GM12878 (cell line): ENCODE measurements at regions of chr6 and their contacts with region 1.

Region 1: DNA sequence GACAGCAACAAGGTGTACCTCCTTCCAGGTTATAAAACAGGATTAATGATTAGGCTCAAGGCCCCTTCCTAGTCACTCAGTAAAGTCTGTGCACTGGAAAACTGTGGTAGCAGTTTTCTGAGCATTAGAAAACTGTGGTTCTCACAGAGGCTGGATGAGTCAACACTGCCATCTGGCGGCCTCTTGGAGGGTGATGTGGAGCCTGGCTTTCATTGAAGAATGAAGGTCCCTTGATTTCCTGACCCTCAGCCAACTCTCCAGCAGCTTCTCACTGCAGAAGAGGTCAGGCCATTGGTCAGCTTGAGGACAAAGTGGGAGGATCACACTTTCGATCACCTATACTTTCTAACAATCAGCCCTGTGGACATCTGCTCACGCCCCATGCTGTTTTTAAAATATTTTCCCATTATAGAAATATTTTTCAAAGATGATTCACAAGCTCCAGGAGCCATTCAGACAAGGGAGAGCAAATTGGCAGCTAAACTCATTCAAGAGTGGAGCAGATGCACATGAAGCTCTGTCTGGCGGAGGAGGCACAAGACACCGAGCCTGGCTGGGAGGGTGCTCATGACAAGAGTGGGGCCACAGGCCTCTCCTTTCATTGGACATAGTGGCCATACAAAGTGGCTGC is 23.2 kb downstream of the PSMB1 start:
- DNase-seq: peak; percentile 4
- ATAC-seq: peak; percentile 97
- H3K4me3 ChIP-seq: no peak overlapping the region
- H3K27ac ChIP-seq: no peak overlapping the region
- H3K4me1 ChIP-seq: no peaks in the 10 kb centered on the region
- H3K27me3 ChIP-seq: no peaks in the 10 kb centered on the region
- CTCF ChIP-seq: peak; percentile 84 to 94 (median 92); a peak in 5 of 6 replicates
- EP300 ChIP-seq: no peak
- POLR2A ChIP-seq: no peak
- RAD21 ChIP-seq: peak; percentile 89

Region 2: GRCh38 chr6:168895102-168895812 is 1634.7 kb before region 1 on chr6:
- CTCF ChIA-PET with region 1: interaction called, 3 read pairs
- POLR2A ChIA-PET with region 1: no interaction called
- RAD21 ChIA-PET with region 1: no interaction called
- SMC1A ChIA-PET with region 1: no interaction called
- in situ Hi-C with region 1: loop called (anchors 5 kb)
- intact Hi-C with region 1: no loop called
- DNase-seq: peak; percentile 5
- ATAC-seq: peak; percentile 94
- H3K4me3 ChIP-seq: no peak overlapping the region; the same call in 1 of the 2 replicates
- H3K27ac ChIP-seq: no peak overlapping the region
- H3K4me1 ChIP-seq: no peaks in the 10 kb centered on the region
- H3K27me3 ChIP-seq: no peaks in the 10 kb centered on the region
- CTCF ChIP-seq: peak; percentile 75 to 96 (median 80)
- EP300 ChIP-seq: no peak
- POLR2A ChIP-seq: no peak
- RAD21 ChIP-seq: peak; percentile 86

Region 3: DNA sequence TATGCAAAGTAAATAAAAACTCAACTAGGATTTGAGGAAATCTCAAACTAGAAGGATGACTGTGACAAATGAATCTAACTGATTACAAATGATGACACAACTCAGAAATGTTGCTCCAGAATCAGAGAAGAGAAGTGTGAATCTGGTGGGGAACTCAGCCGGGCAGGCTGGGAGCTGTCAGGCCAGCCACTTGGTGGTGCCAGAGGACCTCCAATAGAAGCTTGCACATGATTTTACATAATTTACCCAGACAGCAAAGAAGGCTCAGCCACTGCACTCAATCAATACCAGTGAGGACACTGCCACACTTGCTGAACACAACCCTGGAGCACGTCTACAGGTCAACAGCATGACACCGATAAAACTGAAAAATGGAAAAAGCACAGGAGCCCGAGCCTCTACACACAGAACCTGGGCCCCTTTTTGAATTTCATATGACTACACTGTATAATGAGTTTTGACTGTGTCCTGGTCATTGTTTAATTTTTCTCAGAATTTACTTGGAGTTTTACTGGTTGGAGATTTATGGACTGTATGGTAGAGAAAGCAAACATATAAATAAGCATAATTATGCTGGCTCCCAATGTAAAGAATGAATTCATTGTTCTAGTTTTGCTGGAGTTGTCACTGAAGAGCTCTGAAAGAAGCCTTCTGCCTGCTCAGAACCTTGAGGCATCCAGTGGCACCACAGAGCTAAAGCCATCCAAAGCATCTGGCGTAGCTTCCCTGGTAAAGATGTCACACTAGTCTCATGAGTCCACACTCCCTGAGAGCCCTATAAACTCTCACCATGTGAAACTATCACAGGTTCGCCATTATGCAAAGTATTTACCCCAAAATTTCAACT is 1572.8 kb before region 1 on chr6:
- CTCF ChIA-PET with region 1: interaction called, 4 read pairs
- POLR2A ChIA-PET with region 1: no interaction called
- RAD21 ChIA-PET with region 1: no interaction called
- SMC1A ChIA-PET with region 1: interaction called, 3 read pairs
- in situ Hi-C with region 1: no loop called
- intact Hi-C with region 1: loop called (anchors 5 kb)
- DNase-seq: no peak
- ATAC-seq: peak; percentile 70
- H3K4me3 ChIP-seq: no peak overlapping the region
- H3K27ac ChIP-seq: no peak overlapping the region
- H3K4me1 ChIP-seq: no peaks in the 10 kb centered on the region
- H3K27me3 ChIP-seq: no peaks in the 10 kb centered on the region
- CTCF ChIP-seq: peak; percentile 53 to 68 (median 60); a peak in 5 of 6 replicates
- EP300 ChIP-seq: no peak
- POLR2A ChIP-seq: no peak
- RAD21 ChIP-seq: peak; percentile 66

Region 4: GRCh38 chr6:169789982-169790927 is 739.7 kb before region 1 on chr6:
- CTCF ChIA-PET with region 1: interaction called, 33 read pairs
- POLR2A ChIA-PET with region 1: no interaction called
- RAD21 ChIA-PET with region 1: interaction called, 7 read pairs
- SMC1A ChIA-PET with region 1: interaction called, 5 read pairs
- in situ Hi-C with region 1: no loop called
- intact Hi-C with region 1: no loop called
- DNase-seq: no peak
- ATAC-seq: peak; percentile 98
- H3K4me3 ChIP-seq: peak overlapping the region; percentile 45; the same call in 1 of the 2 replicates
- H3K27ac ChIP-seq: no peak overlapping the region
- H3K4me1 ChIP-seq: peaks cover 4% of the 10 kb centered on the region; the same call in 1 of the 2 replicates
- H3K27me3 ChIP-seq: peaks cover 3 to 4% of the 10 kb centered on the region in 2 experiments
- CTCF ChIP-seq: peak; percentile 89 to 96 (median 93)
- EP300 ChIP-seq: no peak
- POLR2A ChIP-seq: no peak
- RAD21 ChIP-seq: peak; percentile 87

Region 5: DNA sequence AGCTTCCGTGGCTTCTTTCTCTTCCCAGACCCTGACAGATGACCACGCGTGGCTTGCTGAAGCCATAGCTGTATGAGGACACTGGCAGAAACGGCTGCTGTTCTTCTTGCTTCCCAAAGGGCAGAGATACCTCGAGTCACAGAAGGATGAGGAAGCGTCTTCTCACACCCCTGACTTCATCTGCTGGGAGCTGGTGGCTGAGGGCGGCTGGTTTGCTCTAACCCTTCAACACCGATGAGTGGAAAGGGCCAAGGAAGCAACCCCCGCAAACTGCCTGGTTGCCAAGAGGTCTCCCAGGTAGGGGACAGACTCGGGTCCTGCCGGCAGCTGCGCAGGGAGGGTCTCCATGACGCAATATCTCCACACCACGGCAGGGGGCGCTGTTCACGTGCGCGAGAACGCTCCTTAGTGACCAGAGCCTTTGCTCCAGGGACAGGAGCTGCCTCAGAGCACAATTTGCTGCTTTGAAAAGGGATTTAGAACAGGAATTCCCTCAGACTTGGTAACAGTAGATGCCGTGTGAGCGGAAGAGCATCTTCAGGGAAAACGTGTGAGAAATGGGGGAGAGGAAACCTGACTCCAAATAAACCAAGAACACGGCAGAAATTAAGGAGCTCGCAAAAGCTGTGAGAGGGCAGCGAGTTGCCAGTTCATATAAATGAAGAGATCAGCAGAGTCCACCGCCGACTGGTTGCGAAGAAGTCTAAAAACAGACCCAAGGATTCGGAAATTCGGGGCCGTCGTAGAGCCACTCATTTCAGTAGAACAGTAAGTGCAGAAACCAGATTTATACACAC is 698.3 kb before region 1 on chr6:
- CTCF ChIA-PET with region 1: interaction called, 39 read pairs
- POLR2A ChIA-PET with region 1: no interaction called
- RAD21 ChIA-PET with region 1: interaction called, 18 read pairs
- SMC1A ChIA-PET with region 1: interaction called, 14 read pairs
- in situ Hi-C with region 1: no loop called
- intact Hi-C with region 1: loop called (anchors 1 kb)
- DNase-seq: no peak
- ATAC-seq: peak; percentile 95
- H3K4me3 ChIP-seq: no peak overlapping the region
- H3K27ac ChIP-seq: no peak overlapping the region
- H3K4me1 ChIP-seq: no peaks in the 10 kb centered on the region
- H3K27me3 ChIP-seq: no peaks in the 10 kb centered on the region
- CTCF ChIP-seq: peak; percentile 79 to 84 (median 80)
- EP300 ChIP-seq: no peak
- POLR2A ChIP-seq: no peak
- RAD21 ChIP-seq: peak; percentile 75

Region 6: GRCh38 chr6:170244721-170245474 is 285.1 kb before region 1 on chr6:
- CTCF ChIA-PET with region 1: no interaction called
- POLR2A ChIA-PET with region 1: no interaction called
- RAD21 ChIA-PET with region 1: no interaction called
- SMC1A ChIA-PET with region 1: no interaction called
- in situ Hi-C with region 1: no loop called
- intact Hi-C with region 1: no loop called
- DNase-seq: no peak
- ATAC-seq: no peak
- H3K4me3 ChIP-seq: no peak overlapping the region
- H3K27ac ChIP-seq: no peak overlapping the region
- H3K4me1 ChIP-seq: no peaks in the 10 kb centered on the region
- H3K27me3 ChIP-seq: no peaks in the 10 kb centered on the region
- CTCF ChIP-seq: no peak
- EP300 ChIP-seq: no peak
- POLR2A ChIP-seq: no peak
- RAD21 ChIP-seq: no peak

Region 7: DNA sequence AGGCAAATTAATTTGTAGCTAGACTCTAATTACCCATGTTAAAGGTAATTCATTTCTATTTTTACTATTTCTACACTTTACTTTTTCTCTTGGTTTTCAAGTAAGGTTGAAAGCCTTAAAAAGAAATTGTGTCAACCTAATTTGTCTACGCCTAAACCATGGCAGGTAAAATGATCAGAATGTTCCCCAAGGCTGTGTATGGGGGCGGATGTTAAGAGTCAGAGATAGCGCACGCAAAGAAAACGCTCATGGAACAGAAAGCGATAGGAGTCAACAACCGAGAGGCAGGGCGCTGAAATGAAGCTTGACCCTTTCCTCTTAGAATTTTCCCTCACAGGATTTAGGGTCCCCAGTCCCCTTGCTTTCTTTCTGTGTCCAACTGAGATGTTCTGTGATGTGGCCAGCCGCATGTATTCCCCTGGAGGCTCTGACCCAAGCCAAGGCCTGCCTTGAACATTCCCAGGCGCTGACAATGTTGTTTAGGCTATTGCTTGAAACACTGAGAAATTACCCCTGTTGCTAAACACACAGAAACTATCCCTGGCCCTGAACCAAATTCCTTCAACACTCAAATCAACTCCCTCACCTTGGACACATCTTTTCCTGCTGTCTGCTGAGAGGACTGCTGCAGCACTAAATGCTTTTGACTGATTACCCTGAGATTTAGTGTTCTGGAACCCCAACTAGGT is 12.2 kb after region 1 on chr6:
- CTCF ChIA-PET with region 1: interaction called, 33 read pairs
- POLR2A ChIA-PET with region 1: no interaction called
- RAD21 ChIA-PET with region 1: interaction called, 3 read pairs
- SMC1A ChIA-PET with region 1: interaction called, 24 read pairs
- in situ Hi-C with region 1: no loop called
- intact Hi-C with region 1: no loop called
- DNase-seq: no peak
- ATAC-seq: no peak
- H3K4me3 ChIP-seq: no peak overlapping the region
- H3K27ac ChIP-seq: no peak overlapping the region
- H3K4me1 ChIP-seq: no peaks in the 10 kb centered on the region
- H3K27me3 ChIP-seq: no peaks in the 10 kb centered on the region
- CTCF ChIP-seq: no peak
- EP300 ChIP-seq: no peak
- POLR2A ChIP-seq: no peak
- RAD21 ChIP-seq: no peak

Region 8: GRCh38 chr6:170554013-170554795 is 24.2 kb after region 1 on chr6 and contains the start of gene TBP:
- CTCF ChIA-PET with region 1: interaction called, 15 read pairs
- POLR2A ChIA-PET with region 1: interaction called, 7 read pairs
- RAD21 ChIA-PET with region 1: no interaction called
- SMC1A ChIA-PET with region 1: interaction called, 3 read pairs
- in situ Hi-C with region 1: no loop called
- intact Hi-C with region 1: no loop called
- DNase-seq: peak; percentile 91
- ATAC-seq: peak; percentile 95
- H3K4me3 ChIP-seq: peak within 1 kb of the TSS; percentile 76
- H3K27ac ChIP-seq: peak within 1 kb of the TSS; percentile 90
- H3K4me1 ChIP-seq: peaks cover 3% of the 10 kb centered on the region; the same call in 1 of the 2 replicates
- H3K27me3 ChIP-seq: no peaks in the 10 kb centered on the region
- CTCF ChIP-seq: no peak
- EP300 ChIP-seq: peak in 1 of 2 experiments; percentile 63; a peak in 1 of 4 replicates
- POLR2A ChIP-seq: peak; percentile 81
- RAD21 ChIP-seq: no peak
- polyA plus RNA-seq, gene TBP: 26.0 to 35.5 TPM